Naive thymus-derived CD4-positive, alpha-beta T cell (primary cell): ENCODE measurements at regions of chr1 and their contacts with region 1.

Region 1: DNA sequence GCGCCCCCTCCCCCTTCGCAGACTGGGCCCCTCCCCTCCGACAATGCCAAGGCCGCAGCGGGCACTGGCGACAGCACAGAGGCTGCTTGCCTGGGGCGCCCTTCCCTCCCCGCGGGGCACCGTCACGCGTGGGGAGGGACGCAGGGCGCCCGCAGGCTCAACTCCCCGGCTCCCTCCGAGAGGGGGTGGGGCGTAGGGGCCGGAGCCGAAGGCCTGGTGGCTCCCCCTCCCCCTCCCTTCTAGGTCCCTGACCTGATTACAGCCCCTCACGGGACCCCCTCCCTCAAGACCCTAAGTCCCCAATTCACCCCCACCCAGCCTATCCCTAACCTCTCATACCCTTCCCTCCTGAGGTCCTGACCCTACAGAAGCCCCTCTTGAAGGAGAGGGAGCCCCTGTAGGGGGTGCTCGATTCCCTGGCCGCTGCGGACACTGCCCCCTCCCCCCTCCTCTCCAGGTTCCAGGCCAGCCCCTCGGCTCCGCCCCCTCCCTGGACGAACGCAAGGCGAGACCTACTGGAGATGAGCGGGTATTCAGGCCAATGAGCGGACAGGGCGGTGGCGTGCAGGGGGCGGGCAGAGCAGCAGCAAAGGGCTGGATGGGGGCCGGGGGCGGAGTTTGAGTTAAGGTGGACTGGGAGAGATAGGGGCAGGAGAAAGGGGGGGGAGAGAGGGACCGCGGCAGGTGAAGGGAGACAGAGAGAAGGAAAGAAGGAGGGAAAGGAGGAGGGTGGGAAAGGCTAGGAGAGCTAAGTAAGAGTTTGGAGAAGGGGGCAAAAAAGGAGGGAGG is 733 bp upstream of the ZBTB7B start:
- DNase-seq: peak; percentile 90 to 98 (median 95)
- ATAC-seq: peak; percentile 87
- H3K4me3 ChIP-seq: peak overlapping the region; percentile 95
- H3K4me3 Mint-ChIP-seq: peak overlapping the region; percentile 90 to 100 (median 95)
- H3K27ac ChIP-seq: peak overlapping the region; percentile 88
- H3K27ac Mint-ChIP-seq: peak overlapping the region; percentile 70 to 99 (median 91)
- H3K4me1 ChIP-seq: peaks cover 23 to 40% of the 10 kb centered on the region in 2 donors
- H3K4me1 Mint-ChIP-seq: peaks cover 29 to 63% (median 55%) of the 10 kb centered on the region in 7 donors
- H3K27me3 ChIP-seq: no peaks in the 10 kb centered on the region
- H3K27me3 Mint-ChIP-seq: no peaks in the 10 kb centered on the region

Region 2: GRCh38 chr1:154324669-154325582 is 676.9 kb before region 1 on chr1 and contains the start of gene ATP8B2:
- CTCF ChIA-PET with region 1: no interaction called
- POLR2A ChIA-PET with region 1: no interaction called
- intact Hi-C with region 1: loop called in 1 of 2 experiments (anchors 5 kb)
- DNase-seq: peak; percentile 60 to 82 (median 77)
- ATAC-seq: peak; percentile 80
- H3K4me3 ChIP-seq: peak within 1 kb of the TSS; percentile 79
- H3K4me3 Mint-ChIP-seq: peak within 1 kb of the TSS; percentile 92 to 98 (median 96)
- H3K27ac ChIP-seq: peak within 1 kb of the TSS; percentile 94
- H3K27ac Mint-ChIP-seq: peak within 1 kb of the TSS; percentile 80 to 95 (median 92)
- H3K4me1 ChIP-seq: peaks cover 24 to 36% of the 10 kb centered on the region in 2 donors
- H3K4me1 Mint-ChIP-seq: peaks cover 27 to 42% (median 38%) of the 10 kb centered on the region in 7 donors
- H3K27me3 ChIP-seq: no peaks in the 10 kb centered on the region
- H3K27me3 Mint-ChIP-seq: peaks cover 0 to 31% (median 0%) of the 10 kb centered on the region in 5 donors
- total RNA-seq, gene ATP8B2: 105 to 130 (median 117) TPM

Region 3: GRCh38 chr1:154961497-154962262 is 40.2 kb before region 1 on chr1 and contains the start of gene PYGO2:
- CTCF ChIA-PET with region 1: interaction called, 9 read pairs
- POLR2A ChIA-PET with region 1: interaction called, 21 read pairs
- intact Hi-C with region 1: loop called (anchors 1 kb)
- DNase-seq: peak; percentile 72 to 88 (median 78)
- ATAC-seq: peak; percentile 86
- H3K4me3 ChIP-seq: peak within 1 kb of the TSS; percentile 54
- H3K4me3 Mint-ChIP-seq: peak within 1 kb of the TSS; percentile 91 to 98 (median 94)
- H3K27ac ChIP-seq: peak within 1 kb of the TSS; percentile 96
- H3K27ac Mint-ChIP-seq: peak within 1 kb of the TSS; percentile 83 to 100 (median 95)
- H3K4me1 ChIP-seq: peaks cover 18 to 26% of the 10 kb centered on the region in 2 donors
- H3K4me1 Mint-ChIP-seq: peaks cover 16 to 58% (median 46%) of the 10 kb centered on the region in 7 donors
- H3K27me3 ChIP-seq: no peaks in the 10 kb centered on the region
- H3K27me3 Mint-ChIP-seq: no peaks in the 10 kb centered on the region
- total RNA-seq, gene PYGO2: 33.0 to 69.5 (median 46.2) TPM

Region 4: DNA sequence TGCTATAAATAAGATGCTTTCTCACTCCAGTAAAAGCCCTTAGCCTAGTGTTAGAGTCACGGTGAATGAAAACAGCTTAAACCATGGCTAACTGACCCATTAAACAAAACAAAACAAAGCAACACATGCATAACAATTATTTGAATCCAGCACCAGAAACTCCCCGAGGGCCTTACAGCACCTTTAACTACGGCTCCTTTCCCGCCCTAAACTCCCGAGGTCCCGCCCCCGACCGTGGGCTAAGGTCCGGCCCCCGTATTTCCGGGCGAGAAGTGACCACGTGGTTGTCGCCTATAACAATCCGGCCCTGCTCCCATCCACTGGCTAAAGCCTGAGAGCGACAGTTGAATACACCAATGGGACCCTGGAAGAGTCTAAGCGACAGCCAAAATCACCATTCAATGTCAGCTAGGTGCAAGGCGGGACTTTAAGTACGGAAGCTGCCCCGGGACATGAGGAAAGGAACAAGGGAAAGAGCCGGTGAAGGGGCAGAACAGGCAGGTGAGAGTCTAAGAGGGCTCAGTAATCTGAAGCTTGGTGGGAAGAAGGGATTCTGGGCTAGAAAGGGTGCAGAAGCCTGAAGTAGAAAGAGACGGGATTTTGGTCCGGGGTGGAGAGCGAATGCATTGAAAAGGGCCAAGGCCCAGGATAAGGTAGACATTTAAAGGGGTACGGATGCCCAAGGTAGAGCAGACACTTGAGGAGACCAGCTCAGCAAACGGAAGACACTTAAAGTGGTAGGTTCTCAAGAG is 18.8 kb before region 1 on chr1 and contains the start of gene FLAD1:
- CTCF ChIA-PET with region 1: interaction called, 11 read pairs
- POLR2A ChIA-PET with region 1: interaction called, 17 read pairs
- intact Hi-C with region 1: loop called (anchors 1 kb)
- DNase-seq: peak; percentile 71 to 98 (median 95)
- ATAC-seq: peak; percentile 99
- H3K4me3 ChIP-seq: peak within 1 kb of the TSS; percentile 64
- H3K4me3 Mint-ChIP-seq: no peak within 1 kb of the TSS
- H3K27ac ChIP-seq: peak within 1 kb of the TSS; percentile 77
- H3K27ac Mint-ChIP-seq: peak within 1 kb of the TSS in 3 of 9 donors; percentile 38 to 55 (median 41)
- H3K4me1 ChIP-seq: peaks cover 12 to 13% of the 10 kb centered on the region in 2 donors
- H3K4me1 Mint-ChIP-seq: peaks cover 0 to 24% (median 4%) of the 10 kb centered on the region in 7 donors
- H3K27me3 ChIP-seq: no peaks in the 10 kb centered on the region
- H3K27me3 Mint-ChIP-seq: no peaks in the 10 kb centered on the region
- total RNA-seq, gene FLAD1: 24.4 to 50.2 (median 50.0) TPM

Region 5: DNA sequence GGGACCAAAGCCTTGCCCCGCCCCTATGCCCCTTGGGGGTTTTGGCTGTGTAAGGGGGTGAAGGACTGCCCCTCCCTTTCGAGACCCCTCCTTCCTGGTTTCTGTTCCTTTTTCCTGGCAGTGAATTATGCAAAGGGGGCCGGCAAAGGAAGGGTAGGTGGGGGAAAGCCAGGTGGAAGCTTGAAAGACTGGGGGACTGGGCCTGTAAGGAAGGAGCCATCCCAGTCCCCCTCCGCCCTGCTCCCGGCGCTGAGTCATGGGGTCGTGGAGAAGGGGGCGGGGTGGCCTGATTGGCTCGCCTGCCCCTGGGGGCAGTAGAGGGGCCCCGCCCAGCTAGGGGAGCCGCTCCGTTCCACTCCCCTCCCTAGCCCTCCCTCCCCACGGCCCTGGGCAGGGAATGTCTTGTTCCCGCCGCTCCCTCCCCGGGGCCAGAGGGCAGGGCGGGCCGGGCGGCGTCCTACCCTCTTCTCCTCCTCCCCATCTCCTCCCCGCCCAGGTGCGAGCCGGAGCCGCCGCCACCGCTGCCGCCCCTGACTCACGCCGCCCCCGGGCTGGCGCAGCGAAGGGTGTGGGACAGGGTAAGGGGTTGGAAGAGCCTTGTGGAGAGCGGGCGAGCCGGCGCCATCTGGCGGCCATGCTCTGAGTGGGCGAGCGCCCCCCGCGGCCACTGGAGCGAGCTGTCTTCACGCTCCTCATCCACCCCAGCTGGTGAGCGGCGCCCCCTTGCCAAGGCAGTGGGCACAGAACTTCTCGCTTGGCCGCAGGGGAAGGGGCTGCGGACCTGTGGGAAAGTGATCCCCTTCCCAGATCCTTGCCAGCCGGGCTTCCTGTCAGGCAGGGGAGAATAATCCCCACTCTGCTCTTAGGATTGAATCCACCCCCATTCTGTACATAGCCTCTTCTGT is 15.4 kb after region 1 on chr1:
- CTCF ChIA-PET with region 1: interaction called, 291 read pairs
- POLR2A ChIA-PET with region 1: interaction called, 270 read pairs
- intact Hi-C with region 1: loop called (anchors 1 kb)
- DNase-seq: peak; percentile 85 to 93 (median 89)
- ATAC-seq: peak; percentile 98
- H3K4me3 ChIP-seq: peak overlapping the region; percentile 50
- H3K4me3 Mint-ChIP-seq: peak overlapping the region; percentile 51 to 84 (median 70)
- H3K27ac ChIP-seq: peak overlapping the region; percentile 83
- H3K27ac Mint-ChIP-seq: peak overlapping the region; percentile 38 to 98 (median 94)
- H3K4me1 ChIP-seq: peaks cover 38 to 65% of the 10 kb centered on the region in 2 donors
- H3K4me1 Mint-ChIP-seq: peaks cover 38 to 83% (median 71%) of the 10 kb centered on the region in 7 donors
- H3K27me3 ChIP-seq: no peaks in the 10 kb centered on the region
- H3K27me3 Mint-ChIP-seq: no peaks in the 10 kb centered on the region

Region 6: DNA sequence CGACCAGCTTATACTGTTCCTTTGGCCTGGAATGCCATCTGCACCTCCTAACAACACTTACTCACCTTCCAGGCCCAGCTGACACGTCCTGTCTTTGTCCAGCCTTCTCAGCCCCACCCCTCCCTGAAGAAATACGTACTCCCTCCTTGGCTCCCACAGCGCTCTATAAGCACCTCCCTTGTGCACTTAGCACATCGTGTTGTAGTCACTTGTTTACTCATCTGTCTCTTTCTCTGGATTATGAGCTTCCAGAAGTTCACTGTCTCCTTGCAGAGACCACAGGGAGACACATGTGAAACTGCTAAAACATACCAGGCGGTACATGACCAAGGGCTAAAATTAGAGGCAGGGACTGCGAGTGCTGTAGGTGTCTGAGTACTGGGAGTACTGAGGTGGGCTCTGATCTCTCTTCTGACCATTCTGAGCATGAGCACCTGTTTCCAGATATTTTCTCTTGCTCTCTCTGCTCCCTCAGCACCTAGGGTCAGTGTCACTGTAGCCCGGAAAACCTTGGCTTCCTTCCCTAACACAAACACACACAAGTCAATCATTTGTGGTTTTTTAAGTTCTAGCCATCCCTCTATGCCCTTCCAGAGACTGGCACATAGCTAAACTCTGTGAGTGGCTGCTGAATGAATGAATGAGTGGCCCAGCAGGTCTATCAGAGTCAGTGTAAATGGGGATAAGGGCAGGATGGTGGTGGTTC is 36.9 kb after region 1 on chr1:
- CTCF ChIA-PET with region 1: no interaction called
- POLR2A ChIA-PET with region 1: no interaction called
- intact Hi-C with region 1: no loop called
- DNase-seq: no peak
- ATAC-seq: no peak
- H3K4me3 ChIP-seq: no peak overlapping the region
- H3K4me3 Mint-ChIP-seq: no peak overlapping the region
- H3K27ac ChIP-seq: no peak overlapping the region
- H3K27ac Mint-ChIP-seq: no peak overlapping the region
- H3K4me1 ChIP-seq: no peaks in the 10 kb centered on the region
- H3K4me1 Mint-ChIP-seq: peaks cover 0 to 4% (median 0%) of the 10 kb centered on the region in 7 donors
- H3K27me3 ChIP-seq: no peaks in the 10 kb centered on the region
- H3K27me3 Mint-ChIP-seq: peaks cover 0 to 25% (median 0%) of the 10 kb centered on the region in 5 donors

Region 7: GRCh38 chr1:155084722-155085503 is 83.0 kb after region 1 on chr1:
- CTCF ChIA-PET with region 1: interaction called, 3 read pairs
- POLR2A ChIA-PET with region 1: interaction called, 5 read pairs
- intact Hi-C with region 1: loop called (anchors 1 kb)
- DNase-seq: peak; percentile 87 to 96 (median 93)
- ATAC-seq: peak; percentile 86
- H3K4me3 ChIP-seq: peak overlapping the region; percentile 97
- H3K4me3 Mint-ChIP-seq: peak overlapping the region; percentile 88 to 100 (median 94)
- H3K27ac ChIP-seq: peak overlapping the region; percentile 63
- H3K27ac Mint-ChIP-seq: peak overlapping the region; percentile 88 to 98 (median 93)
- H3K4me1 ChIP-seq: peaks cover 51 to 53% of the 10 kb centered on the region in 2 donors
- H3K4me1 Mint-ChIP-seq: peaks cover 24 to 43% (median 41%) of the 10 kb centered on the region in 7 donors
- H3K27me3 ChIP-seq: peaks cover 28 to 31% of the 10 kb centered on the region in 2 donors
- H3K27me3 Mint-ChIP-seq: peaks cover 17 to 41% (median 23%) of the 10 kb centered on the region in 5 donors

Region 8: GRCh38 chr1:155193275-155193990 is 191.6 kb after region 1 on chr1:
- CTCF ChIA-PET with region 1: no interaction called
- POLR2A ChIA-PET with region 1: no interaction called
- intact Hi-C with region 1: loop called in 1 of 2 experiments (anchors 5 kb)
- DNase-seq: peak in 8 of 9 donors; percentile 38 to 89 (median 54)
- ATAC-seq: peak; percentile 54
- H3K4me3 ChIP-seq: peak overlapping the region; percentile 57
- H3K4me3 Mint-ChIP-seq: peak overlapping the region; percentile 88 to 97 (median 92)
- H3K27ac ChIP-seq: peak overlapping the region; percentile 76
- H3K27ac Mint-ChIP-seq: peak overlapping the region; percentile 92 to 99 (median 97)
- H3K4me1 ChIP-seq: peaks cover 11 to 25% of the 10 kb centered on the region in 2 donors
- H3K4me1 Mint-ChIP-seq: peaks cover 8 to 35% (median 29%) of the 10 kb centered on the region in 7 donors
- H3K27me3 ChIP-seq: no peaks in the 10 kb centered on the region
- H3K27me3 Mint-ChIP-seq: no peaks in the 10 kb centered on the region

Region 9: DNA sequence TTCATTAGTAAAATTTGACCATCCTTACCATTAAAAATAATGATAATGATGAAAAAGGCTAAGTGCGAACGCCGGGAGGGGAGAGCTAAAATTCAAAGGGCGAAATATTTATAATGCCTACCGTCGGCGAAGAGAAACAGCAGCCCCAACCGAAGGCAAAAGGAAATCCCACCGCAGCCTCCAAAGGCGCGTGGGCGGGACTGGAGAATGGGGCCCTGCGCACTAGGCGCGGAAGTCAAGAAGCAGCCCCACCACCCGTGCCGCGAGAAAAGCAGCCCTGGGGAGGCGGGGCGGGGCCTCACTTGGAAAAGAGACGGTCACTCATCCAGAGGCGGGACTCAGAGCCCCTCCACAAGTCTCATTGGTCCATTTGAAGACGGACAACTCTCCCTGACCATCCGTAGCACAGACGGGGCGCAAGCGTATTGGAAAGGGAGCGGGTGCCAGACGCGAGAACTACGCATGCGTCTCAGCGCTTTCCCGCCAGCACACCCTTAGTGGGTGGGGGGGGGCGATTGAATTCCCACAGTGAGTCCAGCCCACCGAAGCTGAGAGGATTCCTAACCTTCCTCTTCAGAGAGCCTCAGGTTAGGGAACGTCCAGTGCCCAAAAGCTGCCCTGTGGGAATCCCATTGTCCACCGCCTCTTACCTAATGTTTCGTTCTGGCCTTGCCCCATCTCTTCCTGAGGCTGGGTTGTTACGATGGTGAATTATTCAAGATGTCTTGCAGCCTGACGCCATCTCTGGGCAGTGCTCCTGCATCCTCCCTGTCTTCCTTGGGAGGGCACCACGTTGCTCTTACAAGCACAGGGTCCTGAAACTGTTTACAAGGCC is 225.6 kb after region 1 on chr1:
- CTCF ChIA-PET with region 1: no interaction called
- POLR2A ChIA-PET with region 1: no interaction called
- intact Hi-C with region 1: no loop called
- DNase-seq: peak; percentile 89 to 99 (median 98)
- ATAC-seq: peak; percentile 97
- H3K4me3 ChIP-seq: peak overlapping the region; percentile 75
- H3K4me3 Mint-ChIP-seq: peak overlapping the region; percentile 79 to 95 (median 88)
- H3K27ac ChIP-seq: peak overlapping the region; percentile 75
- H3K27ac Mint-ChIP-seq: peak overlapping the region; percentile 77 to 97 (median 88)
- H3K4me1 ChIP-seq: peaks cover 11 to 15% of the 10 kb centered on the region in 2 donors
- H3K4me1 Mint-ChIP-seq: peaks cover 11 to 26% (median 19%) of the 10 kb centered on the region in 7 donors
- H3K27me3 ChIP-seq: no peaks in the 10 kb centered on the region
- H3K27me3 Mint-ChIP-seq: peaks cover 0 to 2% (median 0%) of the 10 kb centered on the region in 5 donors